Mammary epithelial cell (primary cell): ENCODE measurements at regions of chr12 and their contacts with region 1.

Region 1: GRCh38 chr12:5171701-5172100 is 128.0 kb downstream of the KCNA5 start:
- DNase-seq: peak; percentile 44
- H3K4me3 ChIP-seq: no peak overlapping the region
- H3K27ac ChIP-seq: no peak overlapping the region
- H3K4me1 ChIP-seq: peaks cover 6% of the 10 kb centered on the region
- H3K27me3 ChIP-seq: no peaks in the 10 kb centered on the region
- CTCF ChIP-seq: peak; percentile 76 to 78

Region 2: GRCh38 chr12:5022465-5023061 is 149.1 kb before region 1 on chr12:
- CTCF ChIA-PET with region 1: no interaction called
- dilution Hi-C with region 1: no loop called
- in situ Hi-C with region 1: no loop called
- intact Hi-C with region 1: loop called (anchors 5 kb)
- DNase-seq: peak; percentile 43
- H3K4me3 ChIP-seq: no peak overlapping the region
- H3K27ac ChIP-seq: no peak overlapping the region
- H3K4me1 ChIP-seq: peaks cover 6% of the 10 kb centered on the region
- H3K27me3 ChIP-seq: peaks cover 3% of the 10 kb centered on the region
- CTCF ChIP-seq: peak; percentile 81 to 94

Region 3: GRCh38 chr12:5083955-5084849 is 87.5 kb before region 1 on chr12:
- CTCF ChIA-PET with region 1: no interaction called
- dilution Hi-C with region 1: no loop called
- in situ Hi-C with region 1: no loop called
- intact Hi-C with region 1: no loop called
- DNase-seq: peak; percentile 40
- H3K4me3 ChIP-seq: no peak overlapping the region
- H3K27ac ChIP-seq: no peak overlapping the region
- H3K4me1 ChIP-seq: peaks cover 9% of the 10 kb centered on the region
- H3K27me3 ChIP-seq: no peaks in the 10 kb centered on the region
- CTCF ChIP-seq: peak; percentile 51 to 78

Region 4: DNA sequence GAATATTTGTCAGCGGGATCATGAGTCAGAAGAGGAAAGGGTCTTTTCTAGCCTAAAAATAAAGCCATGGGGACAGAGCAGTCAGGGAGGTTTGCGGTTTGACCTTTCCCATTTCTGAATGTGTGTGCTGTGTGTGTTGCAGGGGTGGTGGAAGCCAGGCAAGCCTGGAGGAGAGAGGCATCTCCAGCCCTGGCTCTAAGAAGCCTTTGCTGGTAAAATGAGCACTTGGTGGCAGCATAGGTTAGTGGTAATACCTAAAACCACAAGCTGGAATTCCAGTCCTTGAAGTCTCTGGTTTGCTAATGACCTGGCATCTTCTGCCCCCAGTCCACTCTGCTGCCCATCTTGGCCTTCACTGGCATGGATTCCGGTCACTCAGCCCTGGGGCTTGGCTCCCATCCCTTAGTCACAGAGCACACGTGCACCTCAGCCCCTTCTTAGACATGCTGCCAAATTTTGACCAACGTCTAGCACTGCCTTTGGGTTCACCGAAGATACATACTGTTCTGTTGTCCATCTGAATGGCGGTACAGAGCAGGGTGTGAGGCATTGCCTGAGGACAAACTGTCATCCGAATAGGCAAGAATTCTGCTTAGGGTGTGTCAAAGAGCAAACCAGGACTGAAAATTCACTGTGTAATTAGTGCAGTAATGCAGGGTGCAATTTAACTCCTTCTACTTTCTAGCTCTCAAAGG is 75.3 kb before region 1 on chr12:
- CTCF ChIA-PET with region 1: no interaction called
- dilution Hi-C with region 1: no loop called
- in situ Hi-C with region 1: no loop called
- intact Hi-C with region 1: loop called (anchors 1 kb)
- DNase-seq: peak; percentile 38
- H3K4me3 ChIP-seq: no peak overlapping the region
- H3K27ac ChIP-seq: no peak overlapping the region
- H3K4me1 ChIP-seq: peaks cover 3% of the 10 kb centered on the region
- H3K27me3 ChIP-seq: peaks cover 5% of the 10 kb centered on the region
- CTCF ChIP-seq: peak; percentile 9 to 44

Region 5: GRCh38 chr12:5428332-5429221 is 256.9 kb after region 1 on chr12:
- CTCF ChIA-PET with region 1: interaction called, 7 read pairs
- dilution Hi-C with region 1: no loop called
- in situ Hi-C with region 1: loop called in 1 of 2 experiments (anchors 10 kb)
- intact Hi-C with region 1: no loop called
- DNase-seq: no peak
- H3K4me3 ChIP-seq: no peak overlapping the region
- H3K27ac ChIP-seq: no peak overlapping the region
- H3K4me1 ChIP-seq: peaks cover 7% of the 10 kb centered on the region
- H3K27me3 ChIP-seq: peaks cover 33% of the 10 kb centered on the region
- CTCF ChIP-seq: peak; percentile 5 to 39

Region 6: DNA sequence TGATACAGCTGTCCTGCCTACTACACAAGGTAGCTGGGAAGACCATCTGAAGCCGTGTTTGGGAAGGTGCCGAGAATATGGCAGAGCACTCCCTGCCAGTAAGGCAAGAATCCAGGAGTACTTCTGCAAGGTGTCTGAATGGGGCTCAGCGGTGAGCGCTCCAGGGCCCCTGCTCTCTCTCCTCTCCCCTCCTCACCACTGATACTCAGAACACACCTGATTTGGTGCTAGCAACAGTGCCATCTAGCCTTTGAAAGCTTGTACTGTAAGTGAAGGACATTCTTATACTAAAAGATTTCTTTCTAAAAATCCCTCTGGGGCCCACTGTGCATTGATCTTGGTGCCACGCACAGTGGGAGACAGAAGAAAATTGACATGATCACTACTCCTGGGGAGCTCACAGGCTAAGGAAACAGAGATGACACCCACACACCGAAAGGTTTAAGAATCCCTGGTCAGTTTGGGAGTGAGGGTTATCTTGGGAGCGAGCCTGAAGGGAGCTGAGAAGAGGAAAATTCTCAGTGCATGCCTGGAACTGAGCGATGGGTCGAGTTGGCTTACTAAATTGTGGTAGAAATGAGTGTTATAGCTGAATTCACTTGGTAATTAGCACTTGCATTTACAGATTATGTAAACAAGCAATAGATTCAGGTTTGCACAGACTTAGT is 477.1 kb after region 1 on chr12:
- CTCF ChIA-PET with region 1: no interaction called
- dilution Hi-C with region 1: no loop called
- in situ Hi-C with region 1: no loop called
- intact Hi-C with region 1: loop called (anchors 1 kb)
- DNase-seq: no peak
- H3K4me3 ChIP-seq: no peak overlapping the region
- H3K27ac ChIP-seq: no peak overlapping the region
- H3K4me1 ChIP-seq: no peaks in the 10 kb centered on the region
- H3K27me3 ChIP-seq: no peaks in the 10 kb centered on the region
- CTCF ChIP-seq: peak; percentile 26 to 47